Activated T-helper 2 cell treated with anti-CD3 and anti-CD28 coated beads, Interferon-gamma antibody, Interleukin-2, Interleukin-4, amounts not matched to agents 10 μg/mL and 5 μg/mL and 100 μg/mL, durations not matched to agents 14 hours and 24 hours and 36 hours (primary cell): ENCODE measurements at regions of chr19 and their contacts with region 1.

Region 1: DNA sequence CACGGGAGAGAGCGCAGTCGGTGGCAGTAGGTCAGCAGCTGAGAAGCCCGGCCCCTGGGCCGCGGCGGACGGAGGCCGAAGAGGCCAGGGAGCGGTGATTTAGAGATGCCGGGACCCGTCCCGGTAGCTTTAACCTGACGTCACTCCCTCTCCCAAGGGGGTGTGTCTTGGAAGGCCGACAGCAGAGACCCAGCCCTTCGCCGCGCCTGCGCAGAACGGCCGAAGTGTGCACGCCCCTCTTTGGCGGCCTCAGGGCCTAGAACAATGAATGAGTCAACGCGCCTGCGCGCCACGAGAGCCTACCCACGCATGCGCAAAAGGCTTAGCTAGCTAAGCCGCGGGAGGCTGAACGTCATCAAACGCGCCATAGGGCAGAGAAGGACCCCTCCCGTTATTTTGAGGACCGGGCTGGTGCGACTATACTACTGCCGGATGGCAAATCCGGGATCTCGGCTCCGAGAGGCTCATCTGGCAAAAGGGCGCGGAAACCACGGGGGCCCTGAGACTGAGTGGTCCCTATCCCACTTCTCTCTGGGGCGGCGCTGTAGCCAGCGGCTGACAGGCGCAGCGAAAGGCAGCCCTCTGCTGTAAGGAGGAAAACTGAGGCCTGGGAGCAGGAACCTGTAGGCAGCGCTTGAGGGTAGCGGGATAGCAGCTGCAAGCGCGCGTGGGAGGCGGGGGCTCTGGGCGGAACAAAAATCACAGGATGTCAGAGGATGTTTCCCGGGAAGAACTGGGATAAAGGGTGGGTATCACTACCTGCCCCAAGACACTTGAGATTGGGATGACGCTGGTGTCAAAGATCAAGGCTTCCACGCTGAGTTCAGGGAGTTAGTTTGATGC is at the starts of genes IRGQ and ZNF576:
- DNase-seq: peak; percentile 100
- H3K4me3 Mint-ChIP-seq: peak within 1 kb of the TSS; percentile 91
- H3K27ac Mint-ChIP-seq: peak within 1 kb of the TSS; percentile 91
- H3K4me1 Mint-ChIP-seq: peaks cover 27% of the 10 kb centered on the region
- H3K27me3 Mint-ChIP-seq: no peaks in the 10 kb centered on the region
- total RNA-seq, gene IRGQ: 27.8 and 32.7 TPM in 2 replicates
- total RNA-seq, gene ZNF576: 14.5 and 14.8 TPM in 2 replicates

Region 2: DNA sequence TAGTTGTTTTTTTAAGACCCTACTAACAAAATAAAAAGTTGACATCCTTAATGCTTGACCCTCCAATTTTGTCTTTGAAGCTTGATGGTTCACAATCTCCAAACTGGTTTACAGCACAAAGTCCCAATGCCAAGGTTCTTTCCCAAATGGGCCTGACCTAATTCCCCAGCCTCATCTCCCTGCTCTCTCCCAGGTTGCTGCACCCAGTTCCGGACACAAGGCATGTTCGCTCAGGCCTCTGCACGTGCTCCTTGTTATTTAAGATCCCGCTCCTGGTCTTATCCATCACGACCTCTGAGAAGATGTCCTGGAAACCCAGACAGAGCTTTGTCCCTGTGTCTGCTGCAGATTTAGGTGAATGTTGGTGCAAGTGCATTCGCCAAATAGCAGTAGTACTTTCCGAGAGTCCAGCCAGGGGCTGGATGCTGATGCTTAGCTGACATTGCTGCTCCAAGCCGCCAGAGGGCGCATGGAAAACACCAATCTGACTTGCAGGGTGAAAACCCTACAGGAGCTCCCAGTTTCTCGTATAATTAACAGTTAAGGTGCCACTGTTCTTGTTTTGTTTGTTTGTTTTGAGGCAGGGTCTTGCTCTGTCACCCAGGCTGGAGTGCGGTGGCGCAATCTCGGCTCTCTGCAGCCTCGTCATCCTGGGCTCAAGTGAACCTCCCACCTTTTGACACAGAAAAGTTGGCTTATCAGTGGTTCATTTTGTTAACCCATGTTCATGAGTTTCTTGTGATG is 149.3 kb before region 1 on chr19:
- intact Hi-C with region 1: loop called (anchors 2 kb)
- DNase-seq: peak; percentile 67
- H3K4me3 Mint-ChIP-seq: no peak overlapping the region
- H3K27ac Mint-ChIP-seq: no peak overlapping the region
- H3K4me1 Mint-ChIP-seq: peaks cover 16% of the 10 kb centered on the region
- H3K27me3 Mint-ChIP-seq: no peaks in the 10 kb centered on the region

Region 3: DNA sequence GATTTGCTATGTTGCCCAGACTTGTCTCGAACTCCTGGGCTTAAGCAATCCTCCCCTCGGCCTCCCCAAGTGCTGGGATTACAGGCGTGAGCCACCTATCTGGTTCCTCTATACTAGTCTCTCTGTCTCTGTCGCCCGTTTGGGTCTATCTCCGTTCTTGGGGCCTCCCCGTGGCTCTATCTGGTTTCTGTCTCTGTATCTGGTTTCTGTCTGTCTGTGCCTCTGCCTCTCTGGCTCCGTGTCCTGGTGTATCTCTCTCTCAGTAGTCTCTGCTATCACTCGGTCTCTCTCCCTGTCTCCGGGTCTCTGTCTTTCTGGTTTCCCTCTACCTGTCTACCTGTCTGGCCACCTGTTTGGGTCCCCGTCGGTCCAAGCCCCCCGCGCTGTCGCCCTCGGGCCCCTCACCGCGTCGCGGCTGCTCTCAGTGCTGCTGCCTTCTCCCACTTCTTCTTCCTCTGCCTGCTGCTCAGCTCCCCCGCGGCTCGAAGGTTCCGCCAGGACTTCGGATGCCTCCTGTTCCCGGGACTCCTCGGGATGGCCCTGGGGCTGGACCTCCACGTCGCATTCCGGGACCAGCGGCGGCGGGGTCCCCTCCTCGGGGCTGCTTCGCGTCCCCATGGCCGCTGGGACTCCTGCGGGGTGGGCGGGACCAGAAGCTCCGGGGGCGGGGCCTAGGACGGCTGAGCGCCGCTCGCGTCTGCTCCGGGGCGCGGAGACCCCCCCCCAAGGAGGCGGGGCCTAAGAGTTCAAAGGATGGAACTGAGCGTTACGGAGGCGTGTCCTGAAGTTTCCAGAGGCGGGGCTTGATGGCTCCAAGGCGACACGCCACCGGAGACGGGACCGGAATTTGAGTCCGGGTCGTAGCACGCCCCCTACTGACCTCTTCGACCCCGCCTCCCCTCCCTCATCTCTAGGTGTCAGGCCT is 92.5 kb before region 1 on chr19:
- intact Hi-C with region 1: loop called (anchors 1 kb)
- DNase-seq: peak; percentile 96
- H3K4me3 Mint-ChIP-seq: peak overlapping the region; percentile 87
- H3K27ac Mint-ChIP-seq: peak overlapping the region; percentile 93
- H3K4me1 Mint-ChIP-seq: peaks cover 20% of the 10 kb centered on the region
- H3K27me3 Mint-ChIP-seq: no peaks in the 10 kb centered on the region

Region 4: DNA sequence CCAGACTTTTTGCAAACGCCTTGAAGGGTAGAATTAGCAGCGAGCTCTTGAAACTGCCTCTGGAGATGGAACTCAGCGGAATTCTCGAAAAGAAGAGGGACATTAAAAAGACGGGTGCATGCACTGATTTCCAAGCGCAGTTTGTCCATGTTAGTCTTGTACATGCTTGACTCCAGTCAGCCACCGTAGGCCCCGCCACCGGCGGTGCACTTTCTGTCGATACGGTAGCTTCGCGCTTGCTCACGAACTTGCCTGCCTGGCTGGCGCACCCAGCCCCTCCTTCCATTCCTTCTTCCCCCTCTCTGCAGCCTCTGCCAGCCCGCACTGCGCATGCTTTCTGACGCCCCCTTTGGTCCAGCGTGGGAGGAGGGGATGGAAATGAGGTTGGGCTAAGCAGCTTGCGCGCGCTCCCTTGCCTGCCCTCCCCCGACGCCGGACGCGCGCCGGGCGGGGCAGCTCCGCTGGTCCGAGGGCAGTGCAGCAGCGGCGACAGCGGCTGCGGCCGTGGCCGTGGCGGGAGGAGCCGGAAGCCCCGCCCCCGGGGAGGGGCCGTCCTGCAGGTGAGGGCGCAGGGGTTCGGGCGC is 63.2 kb before region 1 on chr19 and contains the start of gene ZNF575:
- intact Hi-C with region 1: loop called (anchors 2 kb)
- DNase-seq: peak; percentile 85
- H3K4me3 Mint-ChIP-seq: peak within 1 kb of the TSS; percentile 87
- H3K27ac Mint-ChIP-seq: peak within 1 kb of the TSS; percentile 90
- H3K4me1 Mint-ChIP-seq: peaks cover 8% of the 10 kb centered on the region
- H3K27me3 Mint-ChIP-seq: no peaks in the 10 kb centered on the region
- total RNA-seq, gene ZNF575: 1.7 and 2.1 TPM in 2 replicates

Region 5: GRCh38 chr19:43545981-43546380 is 50.2 kb before region 1 on chr19:
- intact Hi-C with region 1: no loop called
- DNase-seq: no peak
- H3K4me3 Mint-ChIP-seq: no peak overlapping the region
- H3K27ac Mint-ChIP-seq: no peak overlapping the region
- H3K4me1 Mint-ChIP-seq: no peaks in the 10 kb centered on the region
- H3K27me3 Mint-ChIP-seq: no peaks in the 10 kb centered on the region

Region 6: DNA sequence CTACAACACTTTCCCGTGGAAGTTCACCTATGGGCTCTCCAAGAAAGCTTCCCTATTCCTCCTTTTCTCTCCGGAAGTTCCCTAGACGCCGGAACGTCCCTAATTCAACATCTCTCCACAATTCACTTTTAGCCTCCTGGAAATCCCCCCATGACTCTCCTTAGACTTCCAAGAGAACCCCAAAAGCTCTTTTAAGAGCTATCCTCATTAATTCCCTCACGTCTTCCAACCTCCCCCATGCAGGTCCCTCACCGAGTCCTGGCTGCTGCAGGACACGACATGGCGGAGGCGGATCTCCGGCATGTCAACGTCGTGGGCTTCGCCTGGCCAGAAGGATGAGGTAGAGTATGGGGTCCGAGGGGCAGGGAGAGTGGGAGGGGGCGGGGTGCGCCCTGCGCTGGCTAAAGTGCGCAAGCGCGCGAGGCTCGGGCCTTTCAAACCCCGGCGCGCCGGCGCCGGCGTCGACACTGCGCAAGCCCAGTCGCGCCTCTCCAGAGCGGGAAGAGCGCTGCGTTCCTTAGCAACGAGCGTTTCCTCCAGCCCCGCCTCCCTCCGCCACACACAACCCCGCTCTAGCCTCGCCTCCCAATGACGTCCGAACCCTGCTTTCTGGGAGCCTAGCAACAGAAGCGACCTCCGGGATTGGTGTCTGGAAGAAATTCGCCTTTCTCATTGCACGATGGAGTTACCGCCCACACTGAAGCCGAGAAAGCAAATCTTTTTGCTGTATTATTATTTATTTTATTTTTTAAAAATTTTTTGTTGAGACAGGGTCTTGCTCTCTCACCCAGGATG is 20.9 kb before region 1 on chr19 and contains the starts of genes PINLYP and XRCC1:
- intact Hi-C with region 1: loop called (anchors 1 kb)
- DNase-seq: peak; percentile 95
- H3K4me3 Mint-ChIP-seq: peak within 1 kb of the TSS; percentile 97
- H3K27ac Mint-ChIP-seq: peak within 1 kb of the TSS; percentile 90
- H3K4me1 Mint-ChIP-seq: peaks cover 28% of the 10 kb centered on the region
- H3K27me3 Mint-ChIP-seq: no peaks in the 10 kb centered on the region
- total RNA-seq, gene PINLYP: 9.0 and 9.1 TPM in 2 replicates
- total RNA-seq, gene XRCC1: 27.3 and 27.5 TPM in 2 replicates

Region 7: DNA sequence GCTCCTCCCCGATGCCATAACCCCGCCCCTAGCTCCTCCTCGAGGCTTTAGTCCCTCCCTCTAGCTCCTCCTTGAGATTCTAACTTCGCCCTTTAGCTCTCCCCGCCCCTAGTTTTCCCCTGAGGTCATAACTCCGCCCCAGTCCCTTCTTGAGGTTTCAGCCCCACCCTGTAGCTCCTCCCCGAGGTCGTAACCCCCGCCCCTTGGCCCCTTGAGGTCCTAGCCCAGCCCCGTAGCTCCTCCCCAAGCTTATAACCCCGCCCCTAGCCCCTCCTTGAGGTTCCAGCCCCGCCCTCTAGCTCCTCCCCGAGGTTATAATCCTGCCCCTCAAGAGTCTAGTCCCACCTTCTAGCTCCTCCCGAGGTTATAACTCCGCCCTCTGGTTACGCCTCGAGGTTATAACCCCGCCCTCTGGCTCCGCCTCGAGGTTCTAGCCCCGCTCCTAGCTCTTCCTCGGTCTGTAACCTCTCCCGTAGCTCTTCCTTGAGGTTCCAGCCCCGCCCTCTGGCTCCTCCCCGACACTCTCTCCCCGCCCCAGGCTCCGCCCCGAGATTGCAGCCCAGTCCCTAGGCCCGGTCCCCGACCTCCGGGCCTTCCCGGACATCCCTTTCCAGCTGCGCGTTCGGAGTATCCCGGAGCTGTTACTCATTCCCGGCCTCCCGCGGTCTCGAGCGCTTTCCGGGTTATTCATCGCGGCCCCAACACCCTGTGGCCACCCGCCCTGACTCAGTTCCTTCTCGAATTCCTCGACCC is 72.4 kb after region 1 on chr19:
- intact Hi-C with region 1: loop called (anchors 2 kb)
- DNase-seq: peak; percentile 94
- H3K4me3 Mint-ChIP-seq: peak overlapping the region; percentile 89
- H3K27ac Mint-ChIP-seq: peak overlapping the region; percentile 74
- H3K4me1 Mint-ChIP-seq: peaks cover 30% of the 10 kb centered on the region
- H3K27me3 Mint-ChIP-seq: peaks cover 9% of the 10 kb centered on the region

Region 8: GRCh38 chr19:43723588-43723987 is 127.4 kb after region 1 on chr19:
- intact Hi-C with region 1: no loop called
- DNase-seq: no peak
- H3K4me3 Mint-ChIP-seq: no peak overlapping the region
- H3K27ac Mint-ChIP-seq: no peak overlapping the region
- H3K4me1 Mint-ChIP-seq: peaks cover 3% of the 10 kb centered on the region
- H3K27me3 Mint-ChIP-seq: no peaks in the 10 kb centered on the region